Activated CD4-positive, alpha-beta T cell treated with anti-CD3 and anti-CD28 coated beads for 36 hours (primary cell): ENCODE measurements at regions of chr1 and their contacts with region 1.

Region 1: GRCh38 chr1:38559161-38559824 is 300.3 kb downstream of the RRAGC start:
- DNase-seq: peak; percentile 91
- ATAC-seq: peak; percentile 91
- H3K4me3 Mint-ChIP-seq: peak overlapping the region; percentile 56
- H3K27ac Mint-ChIP-seq: peak overlapping the region; percentile 77
- H3K4me1 Mint-ChIP-seq: peaks cover 49% of the 10 kb centered on the region
- H3K27me3 Mint-ChIP-seq: peaks cover 23% of the 10 kb centered on the region

Region 2: DNA sequence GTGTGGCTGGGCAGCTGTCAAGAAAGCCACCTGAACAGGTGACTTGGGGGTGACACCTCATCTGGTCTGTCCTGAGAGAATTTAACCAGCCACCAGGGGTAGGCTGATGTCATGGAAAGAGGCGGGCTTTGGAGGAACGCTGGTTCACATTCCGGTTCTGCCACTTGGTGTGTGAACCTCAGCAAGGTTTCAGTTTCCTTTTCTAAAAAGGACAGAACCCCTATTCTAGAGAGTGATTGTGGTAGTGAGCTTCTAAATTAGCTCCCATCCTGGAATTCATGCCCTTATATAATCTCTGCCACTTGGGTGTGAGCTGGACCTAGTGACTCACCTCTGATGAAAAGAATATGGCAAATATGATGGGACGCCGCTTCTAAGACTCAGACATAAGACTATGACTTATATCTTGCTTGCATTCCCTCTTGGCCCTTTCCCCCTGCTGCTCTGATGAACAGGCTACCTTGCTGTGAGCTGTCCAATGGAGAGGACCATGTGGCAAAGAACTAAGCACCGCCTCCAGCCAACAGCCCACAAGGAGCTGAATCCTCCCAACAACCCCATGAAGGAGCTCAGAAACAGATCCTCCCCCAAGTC is 31.8 kb before region 1 on chr1:
- CTCF ChIA-PET with region 1: no interaction called
- POLR2A ChIA-PET with region 1: no interaction called
- intact Hi-C with region 1: loop called in 1 of 2 experiments (anchors 1 kb)
- DNase-seq: peak; percentile 85
- ATAC-seq: peak; percentile 87
- H3K4me3 Mint-ChIP-seq: no peak overlapping the region
- H3K27ac Mint-ChIP-seq: peak overlapping the region; percentile 74
- H3K4me1 Mint-ChIP-seq: peaks cover 17% of the 10 kb centered on the region
- H3K27me3 Mint-ChIP-seq: peaks cover 15% of the 10 kb centered on the region

Region 3: DNA sequence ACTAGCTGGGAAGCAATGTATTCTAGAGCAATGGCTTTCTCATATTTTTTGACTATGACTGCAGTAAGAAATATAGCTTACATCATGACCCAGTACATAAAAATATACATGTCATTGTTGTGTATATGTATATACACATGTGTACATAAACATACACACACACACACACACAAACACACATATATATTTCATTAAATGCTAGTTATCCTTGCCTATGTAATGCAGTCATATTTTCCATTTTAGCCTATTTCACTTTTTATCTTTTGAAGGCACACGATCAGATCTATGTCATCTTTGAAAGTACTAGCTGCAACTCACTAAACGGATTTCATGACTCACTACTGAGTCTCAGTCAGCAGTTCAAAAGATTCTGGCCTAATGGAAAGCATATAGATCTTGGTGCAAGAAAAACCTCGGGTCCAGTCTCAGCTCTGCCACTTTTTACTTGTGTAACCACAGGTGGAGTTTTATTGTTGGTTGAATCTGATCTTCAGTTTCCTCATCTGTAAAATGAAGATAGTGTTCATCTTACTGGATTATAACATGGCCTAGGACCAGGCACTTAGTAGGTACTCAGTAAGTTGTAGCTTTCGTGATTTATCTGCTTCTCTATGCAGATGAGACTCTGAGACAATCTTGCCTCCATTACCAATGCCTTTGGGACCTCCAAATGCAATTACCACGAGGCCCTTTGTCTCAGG is 25.4 kb before region 1 on chr1:
- CTCF ChIA-PET with region 1: no interaction called
- POLR2A ChIA-PET with region 1: no interaction called
- intact Hi-C with region 1: loop called in 1 of 2 experiments (anchors 1 kb)
- DNase-seq: peak; percentile 43
- ATAC-seq: peak; percentile 98
- H3K4me3 Mint-ChIP-seq: no peak overlapping the region
- H3K27ac Mint-ChIP-seq: no peak overlapping the region
- H3K4me1 Mint-ChIP-seq: peaks cover 14% of the 10 kb centered on the region
- H3K27me3 Mint-ChIP-seq: peaks cover 5% of the 10 kb centered on the region